ENCODE measurements at regions of chr1 and their contacts with region 1.

Region 1: GRCh38 chr1:179002552-179003345 is 22.9 kb upstream of the FAM20B start:
- DNase-seq: peak; percentile 87
- ATAC-seq: peak; percentile 93
- H3K4me3 Mint-ChIP-seq: no peak overlapping the region
- H3K27ac Mint-ChIP-seq: peak overlapping the region; percentile 56
- H3K4me1 Mint-ChIP-seq: peaks cover 16% of the 10 kb centered on the region
- H3K27me3 Mint-ChIP-seq: no peaks in the 10 kb centered on the region
- CTCF ChIP-seq: peak; percentile 96

Region 2: GRCh38 chr1:178542560-178543356 is 460.0 kb before region 1 on chr1:
- CTCF ChIA-PET with region 1: interaction called, 18 read pairs
- POLR2A ChIA-PET with region 1: no interaction called
- intact Hi-C with region 1: no loop called
- DNase-seq: peak; percentile 90
- ATAC-seq: peak; percentile 93
- H3K4me3 Mint-ChIP-seq: peak overlapping the region; percentile 86
- H3K27ac Mint-ChIP-seq: peak overlapping the region; percentile 87
- H3K4me1 Mint-ChIP-seq: peaks cover 6% of the 10 kb centered on the region
- H3K27me3 Mint-ChIP-seq: no peaks in the 10 kb centered on the region
- CTCF ChIP-seq: peak; percentile 98

Region 3: GRCh38 chr1:178768423-178768822 is 234.3 kb before region 1 on chr1:
- CTCF ChIA-PET with region 1: interaction called, 116 read pairs
- POLR2A ChIA-PET with region 1: no interaction called
- intact Hi-C with region 1: no loop called
- DNase-seq: peak; percentile 23
- ATAC-seq: peak; percentile 84
- H3K4me3 Mint-ChIP-seq: no peak overlapping the region
- H3K27ac Mint-ChIP-seq: no peak overlapping the region
- H3K4me1 Mint-ChIP-seq: no peaks in the 10 kb centered on the region
- H3K27me3 Mint-ChIP-seq: no peaks in the 10 kb centered on the region
- CTCF ChIP-seq: peak; percentile 88

Region 4: DNA sequence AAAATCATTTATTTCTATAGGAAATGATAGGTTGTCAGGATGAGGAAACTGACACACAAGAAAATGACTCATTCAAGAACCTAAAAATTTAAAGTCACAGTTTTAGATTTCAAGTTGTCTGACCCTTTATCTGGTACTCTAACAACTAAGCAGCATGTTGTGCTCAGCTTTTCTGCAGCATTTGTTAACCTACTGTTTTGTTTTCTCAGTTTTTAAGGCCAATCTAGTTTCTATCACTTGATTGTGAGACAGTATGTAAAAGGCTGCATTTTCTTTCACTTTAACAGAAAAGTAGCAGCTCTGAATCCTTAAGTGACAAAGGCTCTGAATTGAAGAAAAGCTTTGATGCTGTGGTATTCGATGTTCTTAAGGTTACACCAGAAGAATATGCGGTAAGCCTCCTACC is 218.6 kb before region 1 on chr1:
- CTCF ChIA-PET with region 1: interaction called, 53 read pairs
- POLR2A ChIA-PET with region 1: no interaction called
- intact Hi-C with region 1: no loop called
- DNase-seq: no peak
- ATAC-seq: peak; percentile 74
- H3K4me3 Mint-ChIP-seq: peak overlapping the region; percentile 54
- H3K27ac Mint-ChIP-seq: peak overlapping the region; percentile 25
- H3K4me1 Mint-ChIP-seq: peaks cover 9% of the 10 kb centered on the region
- H3K27me3 Mint-ChIP-seq: no peaks in the 10 kb centered on the region
- CTCF ChIP-seq: no peak

Region 5: DNA sequence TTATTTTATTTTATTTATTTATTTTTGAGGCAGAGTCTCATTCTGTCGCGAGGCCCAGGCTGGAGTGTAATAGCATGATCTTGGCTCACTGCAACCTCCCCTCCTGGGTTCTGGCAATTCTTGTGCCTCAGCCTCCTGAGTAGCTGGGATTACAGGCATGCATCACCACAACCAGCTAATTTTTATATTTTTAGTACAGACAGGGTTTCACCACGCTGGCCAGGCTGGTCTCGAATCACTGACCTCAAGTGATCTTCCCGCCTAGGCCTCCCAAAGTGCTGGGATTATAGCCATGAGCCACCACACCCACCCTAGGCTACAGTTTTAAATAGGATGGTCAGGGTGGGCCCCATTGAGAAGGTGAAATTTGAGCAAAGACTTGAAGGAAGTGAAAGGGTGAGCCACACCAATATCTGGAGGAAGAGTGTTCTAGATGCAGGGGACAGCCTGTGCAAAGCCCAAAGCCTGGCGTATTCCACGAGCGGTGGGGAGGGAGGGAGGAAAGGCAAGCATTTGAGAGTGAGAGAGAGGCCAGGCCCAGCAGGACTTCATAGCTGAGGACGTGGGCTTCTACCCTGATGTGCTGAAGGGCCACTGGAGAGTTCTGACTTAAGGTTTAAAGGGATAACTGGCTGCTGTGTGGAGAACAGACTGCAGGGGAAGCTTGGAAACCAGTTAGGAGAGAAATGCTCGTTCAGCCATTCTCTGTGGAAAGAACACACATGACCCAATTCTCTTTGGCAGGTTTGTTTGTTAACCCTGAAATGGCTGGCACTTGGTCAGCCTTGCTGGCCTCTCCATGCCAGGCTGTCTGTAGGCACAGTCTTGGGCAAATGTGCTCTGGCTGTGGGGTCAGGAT is 39.7 kb before region 1 on chr1:
- CTCF ChIA-PET with region 1: no interaction called
- POLR2A ChIA-PET with region 1: no interaction called
- intact Hi-C with region 1: no loop called
- DNase-seq: no peak
- ATAC-seq: no peak
- H3K4me3 Mint-ChIP-seq: no peak overlapping the region
- H3K27ac Mint-ChIP-seq: no peak overlapping the region
- H3K4me1 Mint-ChIP-seq: peaks cover 3% of the 10 kb centered on the region
- H3K27me3 Mint-ChIP-seq: peaks cover 2% of the 10 kb centered on the region
- CTCF ChIP-seq: no peak

Region 6: GRCh38 chr1:179016747-179017549 is 14.2 kb after region 1 on chr1:
- CTCF ChIA-PET with region 1: interaction called, 32 read pairs
- POLR2A ChIA-PET with region 1: no interaction called
- intact Hi-C with region 1: no loop called
- DNase-seq: no peak
- ATAC-seq: no peak
- H3K4me3 Mint-ChIP-seq: no peak overlapping the region
- H3K27ac Mint-ChIP-seq: no peak overlapping the region
- H3K4me1 Mint-ChIP-seq: no peaks in the 10 kb centered on the region
- H3K27me3 Mint-ChIP-seq: peaks cover 2% of the 10 kb centered on the region
- CTCF ChIP-seq: no peak

Measured in activated CD8-positive, alpha-beta T cell treated with anti-CD3 and anti-CD28 coated beads for 36 hours (primary cell).